CD14-positive monocyte (primary cell): ENCODE measurements at regions of chr10 and their contacts with region 1.

Region 1: GRCh38 chr10:75235375-75236177 is at the start of gene COMTD1:
- DNase-seq: peak; percentile 83 to 86 (median 84)
- H3K4me3 ChIP-seq: peak within 1 kb of the TSS; percentile 64 to 87 (median 73)
- H3K4me3 Mint-ChIP-seq: peak within 1 kb of the TSS; percentile 84 to 86
- H3K27ac ChIP-seq: peak within 1 kb of the TSS in 1 of 2 donors; percentile 64
- H3K27ac Mint-ChIP-seq: peak within 1 kb of the TSS in 4 of 7 donors; percentile 45 to 75 (median 64)
- H3K4me1 ChIP-seq: peaks cover 16 to 25% of the 10 kb centered on the region in 2 donors
- H3K4me1 Mint-ChIP-seq: peaks cover 15% of the 10 kb centered on the region
- H3K27me3 ChIP-seq: no peaks in the 10 kb centered on the region
- H3K27me3 Mint-ChIP-seq: no peaks in the 10 kb centered on the region
- CTCF ChIP-seq: peak; percentile 100
- polyA plus RNA-seq, gene COMTD1: 15.6 to 16.5 (median 16.1) TPM

Region 2: DNA sequence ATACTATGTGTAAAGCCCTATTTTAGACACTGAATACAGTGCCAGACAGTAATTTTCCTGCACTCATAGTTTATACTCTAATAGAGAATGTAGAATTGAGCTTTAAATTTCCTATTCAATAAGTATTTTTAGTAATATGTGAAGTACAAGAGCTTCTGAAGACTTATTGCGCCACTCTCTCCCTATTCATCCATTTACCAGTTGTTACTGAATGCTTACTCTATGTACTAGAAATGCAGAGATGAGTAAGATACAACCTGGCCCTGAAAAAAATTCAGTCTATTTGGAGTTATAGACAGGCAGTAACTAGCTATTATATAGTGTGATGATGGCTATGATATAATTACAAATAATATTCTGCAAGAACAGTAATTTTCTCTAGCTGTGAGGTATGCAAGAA is 985.7 kb before region 1 on chr10:
- intact Hi-C with region 1: loop called in 1 of 2 experiments (anchors 5 kb)
- DNase-seq: no peak
- H3K4me3 ChIP-seq: no peak overlapping the region
- H3K4me3 Mint-ChIP-seq: no peak overlapping the region
- H3K27ac ChIP-seq: no peak overlapping the region
- H3K27ac Mint-ChIP-seq: no peak overlapping the region
- H3K4me1 ChIP-seq: peaks cover 0 to under 1% of the 10 kb centered on the region in 2 donors
- H3K4me1 Mint-ChIP-seq: peaks cover under 1% of the 10 kb centered on the region
- H3K27me3 ChIP-seq: no peaks in the 10 kb centered on the region
- H3K27me3 Mint-ChIP-seq: no peaks in the 10 kb centered on the region
- CTCF ChIP-seq: no peak

Region 3: DNA sequence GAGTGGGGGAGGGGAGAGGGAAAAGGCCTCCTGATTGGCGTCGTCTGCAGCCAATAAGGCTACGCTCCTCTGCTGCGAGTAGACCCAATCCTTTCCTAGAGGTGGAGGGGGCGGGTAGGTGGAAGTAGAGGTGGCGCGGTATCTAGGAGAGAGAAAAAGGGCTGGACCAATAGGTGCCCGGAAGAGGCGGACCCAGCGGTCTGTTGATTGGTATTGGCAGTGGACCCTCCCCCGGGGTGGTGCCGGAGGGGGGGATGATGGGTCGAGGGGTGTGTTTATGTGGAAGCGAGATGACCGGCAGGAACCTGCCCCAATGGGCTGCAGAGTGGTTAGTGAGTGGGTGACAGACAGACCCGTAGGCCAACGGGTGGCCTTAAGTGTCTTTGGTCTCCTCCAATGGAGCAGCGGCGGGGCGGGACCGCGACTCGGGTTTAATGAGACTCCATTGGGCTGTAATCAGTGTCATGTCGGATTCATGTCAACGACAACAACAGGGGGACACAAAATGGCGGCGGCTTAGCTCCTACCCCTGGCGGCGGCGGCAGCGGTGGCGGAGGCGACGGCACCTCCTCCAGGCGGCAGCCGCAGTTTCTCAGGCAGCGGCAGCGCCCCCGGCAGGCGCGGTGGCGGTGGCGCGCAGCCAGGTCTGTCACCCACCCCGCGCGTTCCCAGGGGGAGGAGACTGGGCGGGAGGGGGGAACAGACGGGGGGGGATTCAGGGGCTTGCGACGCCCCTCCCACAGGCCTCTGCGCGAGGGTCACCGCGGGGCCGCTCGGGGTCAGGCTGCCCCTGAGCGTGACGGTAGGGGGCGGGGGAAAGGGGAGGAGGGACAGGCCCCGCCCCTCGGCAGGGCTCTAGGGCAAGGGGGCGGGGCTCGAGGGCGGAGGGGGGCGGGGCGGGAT is 409.2 kb before region 1 on chr10 and contains the start of gene KAT6B:
- intact Hi-C with region 1: loop called in 1 of 2 experiments (anchors 10 kb)
- DNase-seq: peak; percentile 100
- H3K4me3 ChIP-seq: peak within 1 kb of the TSS; percentile 77 to 95 (median 88)
- H3K4me3 Mint-ChIP-seq: peak within 1 kb of the TSS; percentile 88 to 93
- H3K27ac ChIP-seq: peak within 1 kb of the TSS; percentile 79 to 90
- H3K27ac Mint-ChIP-seq: peak within 1 kb of the TSS; percentile 94 to 99 (median 98)
- H3K4me1 ChIP-seq: peaks cover 27 to 47% of the 10 kb centered on the region in 2 donors
- H3K4me1 Mint-ChIP-seq: peaks cover 49% of the 10 kb centered on the region
- H3K27me3 ChIP-seq: no peaks in the 10 kb centered on the region
- H3K27me3 Mint-ChIP-seq: peaks cover 0 to 4% (median 0%) of the 10 kb centered on the region in 3 donors
- CTCF ChIP-seq: no peak
- polyA plus RNA-seq, gene KAT6B: 3.3 to 6.4 (median 6.2) TPM

Region 4: GRCh38 chr10:75111367-75111906 is 124.1 kb before region 1 on chr10 and contains the start of gene SAMD8:
- intact Hi-C with region 1: loop called (anchors 5 kb)
- DNase-seq: peak; percentile 97 to 98 (median 98)
- H3K4me3 ChIP-seq: peak within 1 kb of the TSS; percentile 53 to 95 (median 87)
- H3K4me3 Mint-ChIP-seq: peak within 1 kb of the TSS; percentile 99 to 100
- H3K27ac ChIP-seq: peak within 1 kb of the TSS; percentile 96 to 100
- H3K27ac Mint-ChIP-seq: peak within 1 kb of the TSS; percentile 98 to 100 (median 99)
- H3K4me1 ChIP-seq: peaks cover 29 to 42% of the 10 kb centered on the region in 2 donors
- H3K4me1 Mint-ChIP-seq: peaks cover 52% of the 10 kb centered on the region
- H3K27me3 ChIP-seq: no peaks in the 10 kb centered on the region
- H3K27me3 Mint-ChIP-seq: peaks cover 0 to 4% (median 3%) of the 10 kb centered on the region in 3 donors
- CTCF ChIP-seq: peak; percentile 16
- polyA plus RNA-seq, gene SAMD8: 13.0 to 18.8 (median 13.7) TPM

Region 5: GRCh38 chr10:75210282-75211006 is 25.1 kb before region 1 on chr10 and contains the start of gene VDAC2:
- intact Hi-C with region 1: loop called (anchors 1 to 2 kb)
- DNase-seq: peak; percentile 85 to 92 (median 91)
- H3K4me3 ChIP-seq: peak within 1 kb of the TSS; percentile 81 to 99 (median 96)
- H3K4me3 Mint-ChIP-seq: peak within 1 kb of the TSS; percentile 99
- H3K27ac ChIP-seq: peak within 1 kb of the TSS; percentile 100
- H3K27ac Mint-ChIP-seq: peak within 1 kb of the TSS; percentile 100
- H3K4me1 ChIP-seq: peaks cover 18 to 23% of the 10 kb centered on the region in 2 donors
- H3K4me1 Mint-ChIP-seq: peaks cover 27% of the 10 kb centered on the region
- H3K27me3 ChIP-seq: no peaks in the 10 kb centered on the region
- H3K27me3 Mint-ChIP-seq: peaks cover 0 to 2% (median 0%) of the 10 kb centered on the region in 3 donors
- CTCF ChIP-seq: no peak
- polyA plus RNA-seq, gene VDAC2: 71.2 to 154 (median 139) TPM